Pancreas (tissue), 10 donors: ENCODE measurements at regions of chr2 and their contacts with region 1.

Region 1: DNA sequence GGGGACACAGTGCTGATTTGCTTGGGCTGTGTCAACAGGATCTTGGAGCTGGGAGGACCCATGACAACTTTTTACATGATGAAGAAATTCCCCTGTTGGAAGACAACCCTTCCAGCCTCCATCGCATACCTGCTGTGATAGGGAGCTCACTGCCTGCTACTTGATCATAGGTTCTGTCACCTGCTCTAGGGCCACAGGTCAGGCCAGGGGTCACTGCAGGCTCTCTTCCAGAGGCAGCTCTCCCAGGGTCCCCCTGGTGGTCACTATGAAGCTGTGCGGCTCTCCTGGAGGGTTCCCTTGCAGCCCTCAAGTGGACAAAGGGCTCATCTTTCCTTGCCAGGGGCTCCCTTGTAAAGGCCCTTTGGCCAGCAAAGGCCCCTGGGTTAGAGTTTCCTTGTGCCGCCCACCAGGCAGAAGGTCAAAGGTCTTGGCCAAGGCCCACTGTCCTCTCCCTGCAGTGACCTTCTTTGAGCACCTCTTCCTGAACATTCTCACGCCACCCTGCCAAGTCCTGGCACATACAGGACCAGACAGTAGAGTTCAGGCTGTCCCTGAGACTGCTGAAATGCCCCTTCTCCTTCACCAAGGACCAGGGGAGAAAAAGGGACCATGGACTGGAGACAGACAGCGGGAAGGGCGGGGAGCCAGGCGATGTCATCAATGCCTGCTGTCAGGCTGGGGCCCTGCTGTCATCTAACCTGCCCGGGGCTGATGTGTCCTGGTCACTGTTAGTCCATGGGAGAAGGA is 345.1 kb downstream of the DYSF start:
- DNase-seq: peak in 1 of 6 donors; percentile 40
- ATAC-seq: peak; percentile 67 to 80 (median 76)
- H3K4me3 ChIP-seq: no peak overlapping the region
- H3K27ac ChIP-seq: no peak overlapping the region
- H3K4me1 ChIP-seq: no peaks in the 10 kb centered on the region
- H3K27me3 ChIP-seq: no peaks in the 10 kb centered on the region
- CTCF ChIP-seq: peak; percentile 58 to 71 (median 67)

Region 2: GRCh38 chr2:71545572-71546274 is 252.7 kb before region 1 on chr2:
- intact Hi-C with region 1: loop called in 1 of 3 experiments (anchors 10 kb)
- DNase-seq: peak in 4 of 6 donors; percentile 21 to 53 (median 38)
- ATAC-seq: peak; percentile 75 to 88 (median 84)
- H3K4me3 ChIP-seq: peak overlapping the region in 2 of 4 donors; percentile 11 to 26
- H3K27ac ChIP-seq: no peak overlapping the region
- H3K4me1 ChIP-seq: no peaks in the 10 kb centered on the region
- H3K27me3 ChIP-seq: peaks cover 0 to 7% (median 0%) of the 10 kb centered on the region in 4 donors
- CTCF ChIP-seq: peak; percentile 10 to 50 (median 38)

Region 3: GRCh38 chr2:71592181-71592711 is 206.2 kb before region 1 on chr2:
- intact Hi-C with region 1: no loop called
- DNase-seq: no peak
- ATAC-seq: no peak
- H3K4me3 ChIP-seq: no peak overlapping the region
- H3K27ac ChIP-seq: no peak overlapping the region
- H3K4me1 ChIP-seq: no peaks in the 10 kb centered on the region
- H3K27me3 ChIP-seq: no peaks in the 10 kb centered on the region
- CTCF ChIP-seq: no peak

Region 4: GRCh38 chr2:71609958-71610357 is 188.5 kb before region 1 on chr2:
- intact Hi-C with region 1: loop called in 2 of 3 experiments (anchors 10 kb)
- DNase-seq: peak in 1 of 6 donors; percentile 1
- ATAC-seq: peak in 2 of 4 donors; percentile 54 to 64
- H3K4me3 ChIP-seq: no peak overlapping the region
- H3K27ac ChIP-seq: no peak overlapping the region
- H3K4me1 ChIP-seq: no peaks in the 10 kb centered on the region
- H3K27me3 ChIP-seq: no peaks in the 10 kb centered on the region
- CTCF ChIP-seq: peak in 1 of 4 donors; percentile 23